Natural killer cell (primary cell): ENCODE measurements at regions of chr17 and their contacts with region 1.

Region 1: DNA sequence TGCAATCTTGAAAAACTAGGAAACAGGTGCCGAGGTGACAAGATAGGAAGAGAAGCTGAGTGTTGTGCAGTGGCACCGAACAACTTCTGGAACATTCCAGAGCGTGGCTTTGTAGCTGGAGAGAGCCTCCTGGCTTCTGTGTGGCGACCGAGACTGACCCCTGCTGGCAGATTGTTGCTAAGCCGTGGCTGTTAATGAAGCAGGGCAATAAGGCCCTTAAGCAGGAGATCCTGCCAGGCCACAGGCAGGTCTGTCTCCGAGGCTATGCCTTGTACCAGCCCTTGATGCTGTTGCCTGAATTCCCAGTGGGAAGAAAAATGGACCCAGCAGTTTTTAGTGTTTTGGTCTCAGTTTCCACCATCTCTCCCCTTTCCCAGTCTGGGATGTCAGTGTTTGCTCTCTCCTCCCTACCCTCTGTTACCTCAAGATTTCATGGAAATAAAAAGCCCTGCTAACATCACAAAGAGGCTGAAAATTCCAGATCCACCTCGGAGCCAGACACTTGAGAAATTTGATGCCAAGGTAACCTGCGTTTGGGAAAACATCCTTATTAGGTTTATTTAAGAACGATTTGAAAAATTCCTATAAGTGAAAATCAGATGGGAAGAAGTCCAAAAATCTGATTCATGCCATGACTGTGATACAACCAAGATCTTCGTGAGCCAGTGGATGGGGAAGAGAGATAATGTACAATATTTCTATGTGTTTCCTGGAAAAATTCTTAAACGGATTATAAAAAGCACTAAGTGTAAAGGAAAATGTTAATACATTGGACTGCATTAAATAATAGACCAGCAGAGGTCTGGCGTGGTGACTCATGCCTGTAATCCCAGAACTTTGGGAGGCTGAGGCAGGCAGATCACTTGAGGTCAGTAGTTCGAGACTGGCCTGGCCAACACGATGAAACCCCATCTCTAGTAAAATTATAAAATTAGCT is 265.1 kb downstream of the PRKCA start:
- DNase-seq: peak; percentile 79 to 86
- ATAC-seq: peak; percentile 76 to 98 (median 96)
- H3K4me3 ChIP-seq: no peak overlapping the region
- H3K4me3 Mint-ChIP-seq: no peak overlapping the region
- H3K27ac ChIP-seq: no peak overlapping the region
- H3K27ac Mint-ChIP-seq: peak overlapping the region in 1 of 2 donors; percentile 23
- H3K4me1 ChIP-seq: peaks cover 6% of the 10 kb centered on the region
- H3K4me1 Mint-ChIP-seq: peaks cover 7 to 10% of the 10 kb centered on the region in 2 donors
- H3K27me3 ChIP-seq: no peaks in the 10 kb centered on the region
- H3K27me3 Mint-ChIP-seq: no peaks in the 10 kb centered on the region
- CTCF ChIP-seq: peak; percentile 88

Region 2: DNA sequence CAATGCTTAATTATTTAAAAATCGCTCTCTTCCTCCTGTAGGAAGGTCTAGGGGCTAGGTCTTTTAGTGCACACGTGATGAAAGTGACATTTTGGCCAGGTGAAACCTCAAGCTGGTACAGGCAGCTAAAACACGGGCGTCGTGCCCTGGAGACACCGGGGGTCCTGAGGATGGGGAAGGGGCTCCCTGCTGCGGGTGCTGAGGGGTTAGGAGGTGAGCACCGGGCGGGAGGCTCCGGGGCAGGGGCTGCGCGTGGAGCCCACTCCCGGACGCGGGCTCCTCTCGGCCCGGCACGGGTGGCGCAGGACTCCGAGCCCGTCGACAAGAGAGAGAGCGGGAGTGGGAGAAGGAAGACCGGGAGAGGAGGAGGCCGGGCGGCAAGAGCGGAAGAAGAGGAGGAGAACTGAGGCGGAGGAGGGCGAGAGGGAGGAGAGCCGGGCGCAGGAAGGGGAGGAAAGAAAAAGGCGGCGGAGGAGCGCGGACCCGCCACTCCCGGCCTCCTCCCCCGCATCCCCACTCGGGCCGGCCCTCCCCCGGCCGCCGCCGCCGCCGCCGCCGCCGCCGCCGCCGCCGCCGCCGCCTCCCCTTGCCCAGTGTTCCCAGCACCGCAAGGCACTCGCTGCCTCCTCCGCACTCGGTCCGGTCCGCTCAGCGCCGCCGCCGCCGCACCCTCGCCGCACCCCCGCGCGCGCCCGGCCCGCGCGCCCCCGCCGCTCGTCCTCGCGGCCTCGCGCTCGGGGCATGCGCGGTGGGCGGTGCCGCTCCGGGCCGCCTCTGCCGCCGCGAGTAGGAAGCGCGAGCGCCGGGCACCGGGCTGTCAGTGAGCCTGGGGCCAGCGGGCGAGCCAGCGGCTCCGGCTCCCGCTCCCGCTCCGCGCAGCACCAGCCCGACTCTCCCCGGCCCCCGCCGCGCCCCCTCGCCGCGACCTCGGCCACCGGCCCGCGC is 265.4 kb before region 1 on chr17 and contains the start of gene PRKCA:
- intact Hi-C with region 1: loop called (anchors 5 kb)
- DNase-seq: peak; percentile 73 to 88
- ATAC-seq: peak; percentile 89 to 93 (median 90)
- H3K4me3 ChIP-seq: peak within 1 kb of the TSS; percentile 68
- H3K4me3 Mint-ChIP-seq: peak within 1 kb of the TSS; percentile 98
- H3K27ac ChIP-seq: no peak within 1 kb of the TSS
- H3K27ac Mint-ChIP-seq: peak within 1 kb of the TSS; percentile 62 to 88
- H3K4me1 ChIP-seq: peaks cover 20% of the 10 kb centered on the region
- H3K4me1 Mint-ChIP-seq: peaks cover 24 to 34% of the 10 kb centered on the region in 2 donors
- H3K27me3 ChIP-seq: no peaks in the 10 kb centered on the region
- H3K27me3 Mint-ChIP-seq: peaks cover 0 to 4% of the 10 kb centered on the region in 2 donors
- CTCF ChIP-seq: no peak
- total RNA-seq, gene PRKCA: 19.6 to 29.0 (median 20.4) TPM

Region 3: GRCh38 chr17:66405836-66406677 is 161.4 kb before region 1 on chr17:
- intact Hi-C with region 1: loop called (anchors 10 kb)
- DNase-seq: no peak
- ATAC-seq: no peak
- H3K4me3 ChIP-seq: no peak overlapping the region
- H3K4me3 Mint-ChIP-seq: peak overlapping the region; percentile 85
- H3K27ac ChIP-seq: no peak overlapping the region
- H3K27ac Mint-ChIP-seq: peak overlapping the region; percentile 83 to 86
- H3K4me1 ChIP-seq: peaks cover 17% of the 10 kb centered on the region
- H3K4me1 Mint-ChIP-seq: peaks cover 52 to 56% of the 10 kb centered on the region in 2 donors
- H3K27me3 ChIP-seq: no peaks in the 10 kb centered on the region
- H3K27me3 Mint-ChIP-seq: no peaks in the 10 kb centered on the region
- CTCF ChIP-seq: no peak

Region 4: GRCh38 chr17:66612993-66613392 is 45.5 kb after region 1 on chr17:
- intact Hi-C with region 1: no loop called
- DNase-seq: no peak
- ATAC-seq: no peak
- H3K4me3 ChIP-seq: no peak overlapping the region
- H3K4me3 Mint-ChIP-seq: no peak overlapping the region
- H3K27ac ChIP-seq: no peak overlapping the region
- H3K27ac Mint-ChIP-seq: no peak overlapping the region
- H3K4me1 ChIP-seq: no peaks in the 10 kb centered on the region
- H3K4me1 Mint-ChIP-seq: peaks cover 11 to 13% of the 10 kb centered on the region in 2 donors
- H3K27me3 ChIP-seq: no peaks in the 10 kb centered on the region
- H3K27me3 Mint-ChIP-seq: no peaks in the 10 kb centered on the region
- CTCF ChIP-seq: no peak